HEK293 (cell line): ENCODE measurements at regions of chr17 and their contacts with region 1.

Region 1: DNA sequence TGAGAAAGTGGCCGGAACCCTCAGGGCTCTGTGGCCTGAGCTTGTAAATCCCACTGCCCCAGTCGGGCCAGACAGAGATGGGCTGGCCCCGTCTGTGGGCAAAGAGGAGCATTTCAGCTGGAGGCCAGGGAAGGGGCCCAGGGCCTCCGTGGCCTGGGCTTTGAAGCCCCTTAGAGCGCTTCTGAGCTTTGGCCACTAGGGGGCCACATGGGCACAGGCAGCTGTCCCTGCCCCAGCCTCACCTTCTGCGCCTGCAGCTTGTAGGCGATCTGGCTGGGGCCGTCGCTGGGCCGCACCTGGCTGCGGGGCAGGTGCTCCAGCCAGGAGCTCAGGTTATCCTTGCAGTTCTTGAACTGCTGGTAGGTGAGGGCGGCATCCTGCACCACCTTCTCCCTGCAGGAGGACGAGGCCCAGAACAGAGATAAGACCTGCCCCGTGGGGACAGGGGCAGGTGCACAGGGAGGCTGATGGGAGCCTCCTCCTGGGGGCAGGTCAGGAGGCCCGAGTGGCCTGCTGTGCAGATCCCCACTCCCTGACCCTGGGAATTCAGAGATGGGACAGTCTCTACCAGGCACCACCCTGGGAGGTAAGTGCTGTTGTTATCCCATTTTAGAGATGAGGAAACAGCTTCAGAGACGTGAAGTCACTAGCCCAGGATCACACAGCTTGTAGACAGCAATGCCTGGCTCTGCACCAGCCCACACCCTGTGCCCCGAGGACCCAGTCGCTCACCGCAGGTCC is 12.8 kb downstream of the EVPL start:
- H3K4me3 ChIP-seq: no peak overlapping the region
- H3K27ac ChIP-seq: no peak overlapping the region
- H3K4me1 ChIP-seq: no peaks in the 10 kb centered on the region
- CTCF ChIP-seq: peak; percentile 94

Region 2: GRCh38 chr17:75921596-75921995 is 92.8 kb before region 1 on chr17:
- CTCF ChIA-PET with region 1: no interaction called
- POLR2A ChIA-PET with region 1: no interaction called
- H3K4me3 ChIP-seq: no peak overlapping the region
- H3K27ac ChIP-seq: no peak overlapping the region
- H3K4me1 ChIP-seq: no peaks in the 10 kb centered on the region
- CTCF ChIP-seq: no peak

Region 3: GRCh38 chr17:75978938-75979704 is 35.2 kb before region 1 on chr17 and contains the starts of genes ACOX1 and TEN1:
- CTCF ChIA-PET with region 1: interaction called, 10 read pairs
- POLR2A ChIA-PET with region 1: no interaction called
- H3K4me3 ChIP-seq: peak within 1 kb of the TSS; percentile 77
- H3K27ac ChIP-seq: peak within 1 kb of the TSS; percentile 96
- H3K4me1 ChIP-seq: peaks cover 24% of the 10 kb centered on the region
- CTCF ChIP-seq: peak; percentile 83

Region 4: DNA sequence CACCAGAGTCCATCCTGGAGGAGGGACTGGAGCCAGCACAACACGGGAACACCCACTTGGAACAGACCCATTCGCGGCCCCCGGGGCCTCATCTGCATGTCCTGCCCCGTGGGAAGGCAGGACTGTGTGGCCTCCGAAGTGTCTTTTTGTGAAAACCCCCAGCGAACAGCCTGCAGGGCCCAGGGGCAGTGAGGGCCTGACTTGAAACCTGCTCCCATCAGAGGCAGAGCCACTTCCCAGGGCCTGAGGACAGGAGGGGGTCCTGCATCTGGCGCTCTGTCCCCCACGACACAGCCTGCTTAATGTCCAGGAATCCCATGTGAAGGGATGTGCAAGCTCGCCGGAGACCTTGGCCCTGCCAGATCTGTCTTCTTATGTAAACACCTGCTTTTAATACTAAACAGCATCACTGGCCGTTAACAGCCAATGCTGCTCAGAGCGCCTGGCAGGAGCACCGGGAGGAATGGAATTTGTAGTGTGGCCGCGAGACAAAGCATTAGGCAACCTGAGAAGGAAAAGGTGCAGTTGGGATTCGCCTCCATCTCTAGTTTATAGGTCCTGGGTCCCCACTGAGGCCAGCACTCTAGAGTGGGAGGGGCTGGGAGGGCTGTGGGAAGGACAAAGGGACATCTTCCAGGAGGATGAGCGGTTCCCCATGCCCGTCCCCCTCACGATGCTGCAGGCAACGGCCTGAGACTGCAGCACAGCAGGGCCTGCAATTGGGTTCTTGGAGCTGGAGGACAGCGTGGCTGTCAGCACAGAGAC is 22.3 kb after region 1 on chr17:
- CTCF ChIA-PET with region 1: interaction called, 24 read pairs
- POLR2A ChIA-PET with region 1: interaction called, 6 read pairs
- H3K4me3 ChIP-seq: no peak overlapping the region
- H3K27ac ChIP-seq: no peak overlapping the region
- H3K4me1 ChIP-seq: no peaks in the 10 kb centered on the region
- CTCF ChIP-seq: no peak

Region 5: DNA sequence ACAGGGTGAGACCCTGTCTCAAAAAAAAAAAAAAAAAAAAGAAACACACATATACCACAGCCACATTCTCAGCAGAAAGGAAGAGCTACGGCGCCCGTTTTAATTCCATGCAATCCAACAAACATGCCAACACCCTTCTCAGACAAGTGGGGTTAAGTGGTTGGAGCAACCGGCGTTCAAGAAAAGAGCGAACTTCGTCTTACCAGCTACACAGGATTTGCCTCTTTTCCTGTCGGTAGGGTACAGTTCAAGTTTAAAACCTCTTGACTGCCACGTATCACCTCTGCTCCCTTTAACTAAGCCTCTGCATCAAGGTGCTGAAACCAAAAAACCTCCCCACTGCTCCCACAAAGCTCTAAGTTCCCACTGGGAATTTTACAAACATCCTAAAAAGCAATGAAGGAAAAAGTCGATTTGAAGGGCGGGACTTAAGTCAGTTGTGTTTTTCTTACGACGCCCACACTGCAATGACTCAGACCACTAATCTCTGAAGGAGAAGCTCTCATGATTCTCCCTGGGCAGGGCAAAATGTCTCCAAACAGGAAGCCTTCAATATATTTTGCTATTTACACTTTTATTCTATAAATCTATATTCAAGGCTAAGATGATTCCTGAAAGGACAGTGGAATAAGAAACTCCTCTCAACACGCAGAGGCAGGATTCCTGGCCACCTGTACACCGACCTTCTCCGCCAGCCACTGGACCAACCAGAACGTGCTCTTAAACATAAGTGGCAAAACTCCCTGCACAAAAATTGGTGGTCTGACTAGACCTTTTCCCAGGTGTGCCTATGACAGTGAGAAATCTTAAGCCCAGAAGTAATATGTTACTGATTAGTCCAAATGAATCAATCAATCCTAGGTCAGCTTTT is 39.1 kb after region 1 on chr17:
- CTCF ChIA-PET with region 1: interaction called, 58 read pairs
- POLR2A ChIA-PET with region 1: interaction called, 3 read pairs
- H3K4me3 ChIP-seq: no peak overlapping the region
- H3K27ac ChIP-seq: no peak overlapping the region; the same call in 1 of the 2 replicates
- H3K4me1 ChIP-seq: peaks cover 5% of the 10 kb centered on the region
- CTCF ChIP-seq: no peak

Region 6: GRCh38 chr17:76072148-76072858 is 57.9 kb after region 1 on chr17 and contains the start of gene SRP68:
- CTCF ChIA-PET with region 1: interaction called, 19 read pairs
- POLR2A ChIA-PET with region 1: interaction called, 6 read pairs
- H3K4me3 ChIP-seq: peak within 1 kb of the TSS; percentile 93
- H3K27ac ChIP-seq: peak within 1 kb of the TSS; percentile 83
- H3K4me1 ChIP-seq: peaks cover 11% of the 10 kb centered on the region
- CTCF ChIP-seq: no peak

Region 7: GRCh38 chr17:76103274-76104139 is 89.2 kb after region 1 on chr17 and contains the start of gene EXOC7:
- CTCF ChIA-PET with region 1: interaction called, 15 read pairs
- POLR2A ChIA-PET with region 1: no interaction called
- H3K4me3 ChIP-seq: peak within 1 kb of the TSS; percentile 71
- H3K27ac ChIP-seq: peak within 1 kb of the TSS; percentile 83
- H3K4me1 ChIP-seq: 0 out of 2 replicates have a peak, but pooled peaks cover 4% of the 10 kb centered on the region
- CTCF ChIP-seq: peak; percentile 26; the same call in 1 of the 2 replicates

Region 8: DNA sequence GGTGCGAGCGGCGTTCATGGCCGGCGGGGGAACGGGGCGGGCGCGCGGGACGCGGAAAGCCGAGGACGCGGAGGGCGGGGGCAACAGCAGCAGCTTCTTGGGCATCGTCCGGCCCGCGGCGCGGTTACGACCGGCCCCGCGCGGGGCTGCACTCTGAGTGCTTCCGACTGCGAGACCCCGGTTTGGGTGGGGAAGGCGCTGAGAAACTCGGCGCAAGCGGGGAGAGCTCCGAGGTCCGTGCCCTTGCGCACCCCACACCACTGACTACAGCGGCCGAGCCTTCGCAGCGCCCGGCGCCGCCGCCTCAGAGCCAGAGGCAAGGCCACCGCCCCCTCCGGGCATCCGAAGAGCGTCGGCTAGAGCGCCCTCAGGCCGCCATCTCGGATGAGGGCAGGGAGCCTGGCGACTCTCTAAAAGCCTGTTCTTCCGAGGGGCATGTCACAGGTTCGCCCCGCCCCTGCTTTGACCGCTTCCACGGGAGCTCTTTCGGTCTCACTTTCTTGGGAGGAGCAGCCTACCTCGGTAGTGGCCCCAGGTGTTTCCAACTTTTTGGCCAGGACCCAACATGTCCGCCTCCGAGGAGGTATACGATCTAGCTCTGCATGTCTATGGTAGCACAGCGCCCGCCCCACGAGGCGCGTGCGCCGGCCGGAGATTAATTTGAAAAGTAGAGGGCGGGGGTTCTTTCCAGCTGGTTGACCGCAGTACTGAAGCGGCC is 339.4 kb after region 1 on chr17 and contains the start of gene PRPSAP1:
- CTCF ChIA-PET with region 1: no interaction called
- POLR2A ChIA-PET with region 1: no interaction called
- H3K4me3 ChIP-seq: peak within 1 kb of the TSS; percentile 90
- H3K27ac ChIP-seq: peak within 1 kb of the TSS; percentile 96
- H3K4me1 ChIP-seq: peaks cover 12% of the 10 kb centered on the region; the same call in 1 of the 2 replicates
- CTCF ChIP-seq: peak; percentile 69

Region 9: GRCh38 chr17:76527430-76528111 is 513.2 kb after region 1 on chr17:
- CTCF ChIA-PET with region 1: no interaction called
- POLR2A ChIA-PET with region 1: no interaction called
- H3K4me3 ChIP-seq: no peak overlapping the region
- H3K27ac ChIP-seq: no peak overlapping the region
- H3K4me1 ChIP-seq: peaks cover 16% of the 10 kb centered on the region
- CTCF ChIP-seq: no peak